ENCODE measurements at regions of chr14 and their contacts with region 1.

Region 1: GRCh38 chr14:34059855-34060638 is 109.2 kb upstream of the EGLN3 start:
- DNase-seq: peak; percentile 86 to 93
- ATAC-seq: peak; percentile 91 to 95 (median 92)
- H3K4me3 ChIP-seq: peak overlapping the region; percentile 82
- H3K27ac ChIP-seq: peak overlapping the region; percentile 99
- H3K4me1 ChIP-seq: peaks cover 31% of the 10 kb centered on the region
- H3K27me3 ChIP-seq: no peaks in the 10 kb centered on the region
- CTCF ChIP-seq: peak; percentile 38

Region 2: DNA sequence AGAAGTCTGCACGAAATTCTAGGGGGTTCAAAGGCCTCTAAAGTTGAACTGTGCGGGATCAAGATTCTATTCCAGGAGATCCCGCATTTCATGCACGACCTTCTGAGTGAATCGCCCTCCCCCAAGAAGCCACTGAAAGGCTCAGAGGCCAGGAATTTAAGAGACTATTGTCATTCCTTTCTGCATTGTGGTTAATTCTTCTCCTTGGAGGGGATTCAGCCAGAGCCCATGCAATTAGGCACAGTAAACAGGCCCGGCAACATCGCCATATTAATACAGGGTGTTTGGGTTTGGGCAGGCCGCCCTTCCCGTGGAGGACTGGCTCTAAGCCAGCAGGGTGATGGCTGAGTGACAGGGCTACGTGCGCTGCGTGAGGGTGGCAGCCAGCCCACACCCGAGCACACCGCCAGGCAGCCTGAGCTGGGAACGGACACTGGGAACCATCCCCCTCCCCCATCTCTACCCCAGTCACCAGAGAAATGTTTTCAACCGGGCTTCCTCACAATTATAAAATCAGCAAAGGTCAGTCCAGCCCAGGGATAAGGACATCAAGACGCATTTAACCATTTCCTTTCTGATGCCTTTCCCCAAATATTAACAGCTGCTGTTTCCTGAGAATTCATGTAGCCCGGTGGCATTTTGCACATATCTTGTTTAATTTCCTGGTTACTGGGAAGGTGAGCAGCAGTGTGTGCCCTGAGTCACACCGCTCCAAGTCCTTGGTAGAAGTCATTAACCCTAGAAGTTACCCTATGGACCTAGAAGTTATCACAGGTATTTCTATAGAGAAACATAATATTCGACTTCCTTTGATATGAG is 121.7 kb before region 1 on chr14:
- intact Hi-C with region 1: loop called in 1 of 2 experiments (anchors 2 kb)
- DNase-seq: peak; percentile 68 to 88
- ATAC-seq: peak; percentile 90 to 98 (median 98)
- H3K4me3 ChIP-seq: peak overlapping the region; percentile 54
- H3K27ac ChIP-seq: peak overlapping the region; percentile 77
- H3K4me1 ChIP-seq: peaks cover 55% of the 10 kb centered on the region
- H3K27me3 ChIP-seq: no peaks in the 10 kb centered on the region
- CTCF ChIP-seq: no peak

Region 3: DNA sequence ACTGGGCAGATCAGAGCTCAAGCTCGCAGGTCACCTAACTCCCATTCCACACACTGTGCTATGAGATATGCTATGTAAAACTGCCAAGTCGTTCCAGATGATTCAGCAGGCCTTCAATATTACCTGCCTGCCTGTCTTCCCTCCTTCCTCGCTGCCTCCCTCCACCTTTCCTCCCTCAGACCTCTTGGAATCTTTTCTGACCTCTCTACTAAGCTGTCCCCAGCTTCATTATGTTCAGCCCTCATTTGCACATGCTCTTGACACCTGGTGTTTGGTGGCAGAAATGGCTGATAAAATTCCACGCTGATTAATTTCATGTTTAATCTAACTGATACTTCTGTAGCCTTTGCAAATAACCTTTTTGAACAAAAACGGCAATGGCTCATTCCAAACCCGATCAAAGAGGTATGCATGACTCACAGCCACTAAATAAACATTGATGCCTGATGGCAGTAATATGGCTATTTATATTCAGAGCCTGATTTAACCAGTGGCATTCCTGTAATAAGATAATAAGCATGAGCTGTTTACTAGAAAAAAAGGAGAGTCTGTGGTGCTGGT is 21.6 kb after region 1 on chr14:
- intact Hi-C with region 1: loop called in 1 of 2 experiments (anchors 1 kb)
- DNase-seq: no peak
- ATAC-seq: peak; percentile 61 to 81 (median 76)
- H3K4me3 ChIP-seq: peak overlapping the region; percentile 49
- H3K27ac ChIP-seq: peak overlapping the region; percentile 99
- H3K4me1 ChIP-seq: peaks cover 40% of the 10 kb centered on the region
- H3K27me3 ChIP-seq: no peaks in the 10 kb centered on the region
- CTCF ChIP-seq: no peak

Region 4: GRCh38 chr14:34120238-34120977 is 60.4 kb after region 1 on chr14:
- intact Hi-C with region 1: no loop called
- DNase-seq: no peak
- ATAC-seq: peak; percentile 54 to 92 (median 56)
- H3K4me3 ChIP-seq: no peak overlapping the region
- H3K27ac ChIP-seq: no peak overlapping the region
- H3K4me1 ChIP-seq: no peaks in the 10 kb centered on the region
- H3K27me3 ChIP-seq: no peaks in the 10 kb centered on the region
- CTCF ChIP-seq: no peak

Measured in psoas muscle (tissue), 8 donors.